ENCODE measurements at regions of chr2 and their contacts with region 1.

Region 1: GRCh38 chr2:197086500-197086899 is 160.0 kb upstream of the PGAP1 start:
- DNase-seq: no peak
- ATAC-seq: peak; percentile 85
- H3K4me3 ChIP-seq: no peak overlapping the region
- H3K4me3 Mint-ChIP-seq: no peak overlapping the region
- H3K27ac ChIP-seq: no peak overlapping the region
- H3K27ac Mint-ChIP-seq: peak overlapping the region in 8 of 9 donors; percentile 21 to 78 (median 64)
- H3K4me1 ChIP-seq: no peaks in the 10 kb centered on the region
- H3K4me1 Mint-ChIP-seq: peaks cover 14 to 30% (median 21%) of the 10 kb centered on the region in 7 donors
- H3K27me3 ChIP-seq: no peaks in the 10 kb centered on the region
- H3K27me3 Mint-ChIP-seq: no peaks in the 10 kb centered on the region

Region 2: GRCh38 chr2:197101519-197101918 is 15.0 kb after region 1 on chr2:
- CTCF ChIA-PET with region 1: no interaction called
- POLR2A ChIA-PET with region 1: interaction called, 5 read pairs
- intact Hi-C with region 1: loop called in 1 of 2 experiments (anchors 2 kb)
- DNase-seq: no peak
- ATAC-seq: no peak
- H3K4me3 ChIP-seq: no peak overlapping the region
- H3K4me3 Mint-ChIP-seq: no peak overlapping the region
- H3K27ac ChIP-seq: no peak overlapping the region
- H3K27ac Mint-ChIP-seq: peak overlapping the region in 4 of 9 donors; percentile 7 to 42 (median 36)
- H3K4me1 ChIP-seq: no peaks in the 10 kb centered on the region
- H3K4me1 Mint-ChIP-seq: peaks cover 12 to 37% (median 17%) of the 10 kb centered on the region in 7 donors
- H3K27me3 ChIP-seq: no peaks in the 10 kb centered on the region
- H3K27me3 Mint-ChIP-seq: no peaks in the 10 kb centered on the region